GM12878 (cell line): ENCODE measurements at regions of chr4 and their contacts with region 1.

Region 1: GRCh38 chr4:111631215-111631999 is 513.8 kb upstream of the FAM241A start:
- DNase-seq: no peak
- ATAC-seq: peak; percentile 69
- H3K4me3 ChIP-seq: no peak overlapping the region
- H3K27ac ChIP-seq: no peak overlapping the region
- H3K4me1 ChIP-seq: no peaks in the 10 kb centered on the region
- H3K27me3 ChIP-seq: no peaks in the 10 kb centered on the region
- CTCF ChIP-seq: peak in 2 of 3 experiments; percentile 32 to 50; a peak in 4 of 6 replicates
- EP300 ChIP-seq: no peak
- POLR2A ChIP-seq: no peak
- RAD21 ChIP-seq: 0 out of 2 replicates have a peak, but pooled peaks have one; percentile 22

Region 2: DNA sequence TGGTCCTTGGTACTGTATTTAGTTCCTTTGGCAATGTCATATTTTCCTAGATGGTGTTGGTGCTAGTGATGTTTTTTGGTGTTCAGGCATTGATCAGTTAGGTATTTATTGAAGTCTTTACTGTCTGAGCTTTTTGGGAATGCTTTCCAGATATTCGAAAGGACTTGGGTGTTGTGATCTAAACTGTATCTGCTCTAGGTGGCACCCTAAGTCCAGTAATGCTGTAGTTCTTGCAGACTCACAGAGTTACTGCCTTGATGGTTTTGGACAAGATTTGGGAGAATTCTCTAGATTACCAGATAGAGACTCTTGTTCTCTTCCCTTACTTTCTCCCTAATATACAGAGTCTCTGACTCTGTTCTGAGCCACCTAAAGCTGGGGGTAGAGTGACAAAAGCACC is 495.0 kb before region 1 on chr4:
- CTCF ChIA-PET with region 1: no interaction called
- POLR2A ChIA-PET with region 1: no interaction called
- RAD21 ChIA-PET with region 1: no interaction called
- SMC1A ChIA-PET with region 1: no interaction called
- in situ Hi-C with region 1: no loop called
- intact Hi-C with region 1: loop called (anchors 10 kb)
- DNase-seq: no peak
- ATAC-seq: no peak
- H3K4me3 ChIP-seq: no peak overlapping the region
- H3K27ac ChIP-seq: no peak overlapping the region
- H3K4me1 ChIP-seq: no peaks in the 10 kb centered on the region
- H3K27me3 ChIP-seq: no peaks in the 10 kb centered on the region
- CTCF ChIP-seq: peak in 2 of 3 experiments; percentile 8 to 18; a peak in 3 of 6 replicates
- EP300 ChIP-seq: no peak
- POLR2A ChIP-seq: no peak
- RAD21 ChIP-seq: peak; percentile 38; the same call in 1 of the 2 replicates

Region 3: GRCh38 chr4:111174331-111174730 is 457.1 kb before region 1 on chr4:
- CTCF ChIA-PET with region 1: no interaction called
- POLR2A ChIA-PET with region 1: no interaction called
- RAD21 ChIA-PET with region 1: no interaction called
- SMC1A ChIA-PET with region 1: no interaction called
- in situ Hi-C with region 1: no loop called
- intact Hi-C with region 1: loop called (anchors 10 kb)
- DNase-seq: no peak
- ATAC-seq: no peak
- H3K4me3 ChIP-seq: no peak overlapping the region
- H3K27ac ChIP-seq: no peak overlapping the region
- H3K4me1 ChIP-seq: no peaks in the 10 kb centered on the region
- H3K27me3 ChIP-seq: no peaks in the 10 kb centered on the region
- CTCF ChIP-seq: no peak
- EP300 ChIP-seq: no peak
- POLR2A ChIP-seq: no peak
- RAD21 ChIP-seq: no peak

Region 4: DNA sequence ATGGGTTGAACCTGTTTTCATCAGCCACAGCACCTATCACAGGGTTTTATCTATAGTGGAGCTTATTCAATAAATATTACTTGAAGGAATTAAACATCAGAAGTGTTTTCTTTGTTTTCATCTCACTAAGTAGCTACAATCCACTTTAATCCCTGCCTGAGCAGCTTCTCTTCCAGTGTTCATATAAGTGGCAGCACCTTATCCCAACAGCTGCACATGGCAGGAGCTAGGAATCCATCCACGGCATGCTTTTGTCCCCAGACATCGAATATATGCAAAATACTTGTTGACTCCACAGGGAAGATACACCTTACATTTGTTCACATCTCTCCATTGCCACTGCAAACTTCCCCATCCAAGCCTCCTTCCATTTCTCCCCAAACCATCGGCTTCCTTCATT is 36.0 kb before region 1 on chr4:
- CTCF ChIA-PET with region 1: no interaction called
- POLR2A ChIA-PET with region 1: no interaction called
- RAD21 ChIA-PET with region 1: no interaction called
- SMC1A ChIA-PET with region 1: no interaction called
- in situ Hi-C with region 1: no loop called
- intact Hi-C with region 1: no loop called
- DNase-seq: no peak
- ATAC-seq: no peak
- H3K4me3 ChIP-seq: no peak overlapping the region
- H3K27ac ChIP-seq: no peak overlapping the region
- H3K4me1 ChIP-seq: no peaks in the 10 kb centered on the region
- H3K27me3 ChIP-seq: no peaks in the 10 kb centered on the region
- CTCF ChIP-seq: no peak
- EP300 ChIP-seq: no peak
- POLR2A ChIP-seq: no peak
- RAD21 ChIP-seq: no peak

Region 5: DNA sequence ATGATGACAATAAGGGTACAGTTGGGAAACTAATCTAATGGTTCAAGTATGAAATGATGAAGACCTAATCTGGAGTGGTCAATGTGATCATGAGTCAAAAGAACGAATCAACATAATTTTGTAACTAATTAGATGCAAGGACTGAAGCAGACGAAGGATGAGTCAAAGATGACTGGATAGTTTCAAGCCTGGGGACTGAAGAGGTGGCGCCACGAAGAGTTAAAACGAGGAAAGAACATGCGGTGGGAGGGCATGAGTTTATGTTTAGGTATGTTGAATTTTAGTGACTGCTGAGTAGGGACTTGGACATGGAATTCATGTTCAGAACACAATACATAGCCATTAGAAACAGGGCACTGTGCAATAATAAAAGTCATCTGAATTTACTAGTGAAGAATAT is 292.4 kb after region 1 on chr4:
- CTCF ChIA-PET with region 1: no interaction called
- POLR2A ChIA-PET with region 1: no interaction called
- RAD21 ChIA-PET with region 1: no interaction called
- SMC1A ChIA-PET with region 1: no interaction called
- in situ Hi-C with region 1: no loop called
- intact Hi-C with region 1: no loop called
- DNase-seq: no peak
- ATAC-seq: no peak
- H3K4me3 ChIP-seq: no peak overlapping the region
- H3K27ac ChIP-seq: no peak overlapping the region
- H3K4me1 ChIP-seq: no peaks in the 10 kb centered on the region
- H3K27me3 ChIP-seq: no peaks in the 10 kb centered on the region; a peak in 1 of 4 replicates
- CTCF ChIP-seq: no peak
- EP300 ChIP-seq: no peak
- POLR2A ChIP-seq: no peak
- RAD21 ChIP-seq: no peak